Sigmoid colon (tissue), 7 donors: ENCODE measurements at regions of chr17 and their contacts with region 1.

Region 1: DNA sequence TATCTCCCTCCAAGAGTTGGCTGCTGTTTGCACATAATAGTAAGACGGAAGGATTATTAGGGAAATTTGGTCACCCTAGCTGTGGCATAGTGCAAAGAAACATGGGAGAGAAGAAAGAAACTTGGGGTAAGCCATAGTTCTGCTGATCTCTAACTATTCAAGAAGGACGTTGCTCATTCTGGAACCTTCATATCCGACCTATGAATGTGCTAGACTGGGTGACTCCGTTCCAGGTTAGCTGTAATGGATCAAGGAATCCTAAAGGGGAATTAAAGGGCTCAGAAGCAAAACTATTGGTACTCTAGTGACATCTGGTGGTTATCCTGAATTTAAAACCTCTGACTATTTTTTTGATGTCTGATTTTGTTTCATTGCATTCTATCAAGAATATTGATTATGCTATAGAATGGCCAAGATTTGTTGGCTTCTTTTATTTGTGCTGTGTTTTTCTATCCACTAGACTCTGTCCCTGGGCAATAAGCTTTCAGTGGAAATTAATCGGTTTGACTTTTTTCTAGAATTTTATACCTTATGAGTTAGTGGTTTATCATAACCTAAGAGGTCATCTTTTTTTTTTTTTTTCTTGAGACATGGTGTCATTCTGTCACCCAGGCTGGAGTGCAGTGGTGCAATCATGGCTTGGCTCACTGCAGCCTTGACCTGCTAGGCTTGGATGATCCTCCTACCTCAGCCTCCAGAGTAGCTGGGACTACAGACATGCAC is 19.5 kb downstream of the PCTP start:
- DNase-seq: no peak
- H3K4me3 ChIP-seq: no peak overlapping the region
- H3K27ac ChIP-seq: peak overlapping the region in 3 of 4 donors; percentile 36 to 63 (median 48)
- H3K4me1 ChIP-seq: peaks cover 0 to 21% (median 19%) of the 10 kb centered on the region in 4 donors
- H3K27me3 ChIP-seq: no peaks in the 10 kb centered on the region
- CTCF ChIP-seq: peak; percentile 31 to 62 (median 57)
- EP300 ChIP-seq: no peak
- POLR2A ChIP-seq: no peak

Region 2: DNA sequence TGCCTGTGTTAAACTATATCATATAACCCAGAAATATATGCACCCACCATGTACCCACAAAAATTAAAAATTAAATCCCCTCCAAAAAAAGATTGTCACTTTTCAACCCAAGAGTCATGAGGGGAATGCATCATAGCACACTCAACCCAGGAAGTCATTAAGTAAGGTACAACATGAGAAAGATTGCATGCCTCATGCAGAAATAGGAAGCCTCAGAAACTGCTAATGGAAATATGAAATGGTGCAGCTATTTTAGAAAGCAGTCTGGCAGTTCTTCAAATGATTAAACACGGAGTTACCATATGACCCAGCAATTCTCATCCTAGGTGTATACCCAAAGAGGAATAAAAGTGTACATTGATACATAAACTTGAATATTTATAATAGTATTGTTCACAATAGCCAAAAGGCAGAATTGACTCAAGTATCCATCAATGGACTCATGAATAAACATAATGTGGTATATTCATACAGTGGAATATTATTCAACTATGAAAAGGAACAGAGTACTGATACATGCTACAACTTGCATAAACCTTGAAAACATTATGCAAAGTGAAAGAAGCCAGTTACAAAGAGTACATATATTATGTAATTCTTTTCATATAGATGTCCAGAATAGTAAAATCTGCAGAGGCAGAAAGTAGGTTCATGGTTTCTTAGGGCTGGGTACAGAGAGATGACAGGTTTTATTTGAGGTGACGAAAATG is 118.0 kb before region 1 on chr17:
- intact Hi-C with region 1: loop called (anchors 5 kb)
- DNase-seq: no peak
- H3K4me3 ChIP-seq: no peak overlapping the region
- H3K27ac ChIP-seq: no peak overlapping the region
- H3K4me1 ChIP-seq: peaks cover 0 to 28% (median 17%) of the 10 kb centered on the region in 4 donors
- H3K27me3 ChIP-seq: no peaks in the 10 kb centered on the region
- CTCF ChIP-seq: no peak
- EP300 ChIP-seq: no peak
- POLR2A ChIP-seq: no peak